Naive thymus-derived CD4-positive, alpha-beta T cell (primary cell): ENCODE measurements at regions of chr15 and their contacts with region 1.

Region 1: DNA sequence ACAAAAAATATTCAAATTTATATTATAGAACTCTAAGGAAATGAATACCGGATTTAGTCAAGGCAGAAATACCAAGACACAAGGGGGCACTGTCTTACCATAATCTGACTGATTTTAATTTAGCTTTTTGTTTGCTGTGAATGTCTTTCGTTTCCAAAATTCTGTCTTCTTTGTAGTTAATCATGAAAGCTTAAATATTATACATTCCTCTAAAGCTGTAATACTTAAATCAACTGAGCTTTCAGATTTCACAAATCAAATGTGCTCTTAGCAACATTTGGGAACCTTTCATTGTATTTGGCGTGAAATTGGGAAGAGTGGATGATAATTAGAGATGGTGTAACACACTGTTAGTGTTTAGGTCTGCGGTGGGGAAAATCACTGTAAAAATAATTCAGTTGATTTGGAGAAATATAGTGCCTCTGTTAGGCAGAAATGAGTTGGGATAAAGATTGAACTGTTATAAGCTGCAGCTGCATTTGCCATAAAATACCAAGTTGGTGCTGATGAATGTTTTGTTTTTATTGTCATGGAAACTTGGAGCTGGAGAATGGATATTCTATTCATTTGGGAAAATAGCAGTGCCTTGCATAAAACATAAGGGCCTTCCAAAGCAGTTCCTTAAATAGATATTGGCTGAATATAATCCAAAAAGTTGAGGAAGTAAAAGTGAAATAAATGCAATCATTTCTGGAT is 228.2 kb downstream of the TCF12 start:
- DNase-seq: peak in 5 of 9 donors; percentile 14 to 35 (median 16)
- ATAC-seq: no peak
- H3K4me3 ChIP-seq: no peak overlapping the region
- H3K4me3 Mint-ChIP-seq: no peak overlapping the region
- H3K27ac ChIP-seq: no peak overlapping the region
- H3K27ac Mint-ChIP-seq: peak overlapping the region in 1 of 9 donors; percentile 14
- H3K4me1 ChIP-seq: no peaks in the 10 kb centered on the region
- H3K4me1 Mint-ChIP-seq: peaks cover 6 to 18% (median 12%) of the 10 kb centered on the region in 7 donors
- H3K27me3 ChIP-seq: no peaks in the 10 kb centered on the region
- H3K27me3 Mint-ChIP-seq: no peaks in the 10 kb centered on the region

Region 2: DNA sequence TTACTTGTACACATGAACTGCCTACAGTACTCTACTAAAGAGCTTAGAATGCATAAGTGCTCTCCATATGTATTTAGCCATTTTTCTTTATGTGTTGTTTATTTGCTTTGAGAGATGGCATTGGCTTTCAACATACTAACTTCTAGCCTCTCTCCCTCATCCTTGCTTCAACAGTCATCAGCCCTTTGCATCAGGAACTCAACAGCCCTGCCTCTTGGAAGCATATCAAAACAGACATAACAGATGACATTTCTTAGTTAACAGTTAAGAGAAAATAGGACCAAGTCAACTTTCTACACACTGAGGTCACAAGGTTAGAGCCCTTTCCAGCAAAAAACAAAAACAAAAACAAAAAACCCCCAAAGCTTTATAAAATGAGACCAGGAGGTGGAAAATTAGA is 82.6 kb before region 1 on chr15:
- CTCF ChIA-PET with region 1: no interaction called
- POLR2A ChIA-PET with region 1: no interaction called
- intact Hi-C with region 1: no loop called
- DNase-seq: no peak
- ATAC-seq: no peak
- H3K4me3 ChIP-seq: no peak overlapping the region
- H3K4me3 Mint-ChIP-seq: no peak overlapping the region
- H3K27ac ChIP-seq: no peak overlapping the region
- H3K27ac Mint-ChIP-seq: no peak overlapping the region
- H3K4me1 ChIP-seq: peaks cover 0 to 4% of the 10 kb centered on the region in 2 donors
- H3K4me1 Mint-ChIP-seq: peaks cover 4 to 45% (median 36%) of the 10 kb centered on the region in 7 donors
- H3K27me3 ChIP-seq: no peaks in the 10 kb centered on the region
- H3K27me3 Mint-ChIP-seq: no peaks in the 10 kb centered on the region

Region 3: GRCh38 chr15:57213862-57214261 is 67.2 kb after region 1 on chr15:
- CTCF ChIA-PET with region 1: no interaction called
- POLR2A ChIA-PET with region 1: no interaction called
- intact Hi-C with region 1: loop called in 1 of 2 experiments (anchors 2 kb)
- DNase-seq: peak in 5 of 9 donors; percentile 5 to 31 (median 14)
- ATAC-seq: peak; percentile 42
- H3K4me3 ChIP-seq: no peak overlapping the region
- H3K4me3 Mint-ChIP-seq: no peak overlapping the region
- H3K27ac ChIP-seq: no peak overlapping the region
- H3K27ac Mint-ChIP-seq: no peak overlapping the region
- H3K4me1 ChIP-seq: no peaks in the 10 kb centered on the region
- H3K4me1 Mint-ChIP-seq: peaks cover 2 to 59% (median 42%) of the 10 kb centered on the region in 7 donors
- H3K27me3 ChIP-seq: no peaks in the 10 kb centered on the region
- H3K27me3 Mint-ChIP-seq: no peaks in the 10 kb centered on the region

Region 4: GRCh38 chr15:57527382-57528091 is 380.9 kb after region 1 on chr15:
- CTCF ChIA-PET with region 1: interaction called, 7 read pairs
- POLR2A ChIA-PET with region 1: no interaction called
- intact Hi-C with region 1: loop called in 1 of 2 experiments (anchors 5 kb)
- DNase-seq: peak in 7 of 9 donors; percentile 20 to 52 (median 41)
- ATAC-seq: no peak
- H3K4me3 ChIP-seq: no peak overlapping the region
- H3K4me3 Mint-ChIP-seq: no peak overlapping the region
- H3K27ac ChIP-seq: no peak overlapping the region
- H3K27ac Mint-ChIP-seq: no peak overlapping the region
- H3K4me1 ChIP-seq: no peaks in the 10 kb centered on the region
- H3K4me1 Mint-ChIP-seq: no peaks in the 10 kb centered on the region
- H3K27me3 ChIP-seq: no peaks in the 10 kb centered on the region
- H3K27me3 Mint-ChIP-seq: peaks cover 4 to 24% (median 9%) of the 10 kb centered on the region in 5 donors